Natural killer cell (primary cell): ENCODE measurements at regions of chr15 and their contacts with region 1.

Region 1: GRCh38 chr15:31215490-31216214 is 111.0 kb upstream of the KLF13 start:
- DNase-seq: peak; percentile 68 to 84
- ATAC-seq: peak; percentile 82 to 87 (median 85)
- H3K4me3 ChIP-seq: peak overlapping the region; percentile 27
- H3K4me3 Mint-ChIP-seq: peak overlapping the region; percentile 87
- H3K27ac ChIP-seq: peak overlapping the region; percentile 87
- H3K27ac Mint-ChIP-seq: peak overlapping the region; percentile 66 to 87
- H3K4me1 ChIP-seq: peaks cover 23% of the 10 kb centered on the region
- H3K4me1 Mint-ChIP-seq: peaks cover 12 to 35% of the 10 kb centered on the region in 2 donors
- H3K27me3 ChIP-seq: no peaks in the 10 kb centered on the region
- H3K27me3 Mint-ChIP-seq: no peaks in the 10 kb centered on the region
- CTCF ChIP-seq: peak; percentile 78

Region 2: DNA sequence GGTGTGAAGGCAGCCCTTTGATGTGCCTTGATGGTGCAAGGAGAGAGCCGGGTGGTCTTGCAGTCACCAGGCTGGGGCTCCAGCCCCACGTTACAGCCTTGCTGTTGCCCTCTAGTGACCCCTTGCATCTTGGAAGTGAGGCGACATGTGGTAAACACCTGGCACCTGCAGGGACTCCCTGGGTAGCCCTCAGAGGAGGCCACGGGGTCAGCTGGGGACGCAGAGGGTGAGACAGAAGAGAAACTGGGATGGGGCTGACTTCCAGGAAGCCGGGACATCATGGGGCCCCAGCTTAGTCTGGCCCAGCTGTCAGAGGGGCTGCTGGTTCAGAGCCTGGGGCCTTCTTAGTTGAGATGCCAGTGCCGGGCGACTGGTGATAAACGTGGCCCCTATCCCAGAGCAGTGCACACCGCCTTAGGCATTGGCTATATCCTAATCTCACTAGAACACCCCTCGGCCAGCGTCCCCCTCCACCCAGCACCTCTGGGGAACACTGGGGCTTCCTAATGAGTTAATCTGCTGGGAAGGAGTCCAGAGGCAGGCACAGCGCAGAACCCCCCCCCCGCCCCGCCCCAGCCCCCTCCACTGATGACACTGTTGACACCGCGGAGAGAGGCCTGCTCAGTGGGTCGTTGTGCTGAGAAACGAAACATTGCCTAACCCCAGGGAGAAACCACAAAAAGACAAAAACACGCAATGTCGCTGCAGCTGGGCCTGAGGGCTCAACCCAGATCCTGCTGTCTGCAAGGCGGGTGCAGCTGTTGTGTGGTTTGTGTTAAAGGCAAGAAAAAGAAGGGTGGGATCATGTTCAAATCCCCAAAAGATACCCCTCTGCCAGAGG is 50.4 kb after region 1 on chr15:
- intact Hi-C with region 1: loop called (anchors 10 kb)
- DNase-seq: peak; percentile 47 to 88
- ATAC-seq: peak; percentile 74 to 83 (median 79)
- H3K4me3 ChIP-seq: no peak overlapping the region
- H3K4me3 Mint-ChIP-seq: peak overlapping the region; percentile 69
- H3K27ac ChIP-seq: peak overlapping the region; percentile 76
- H3K27ac Mint-ChIP-seq: peak overlapping the region; percentile 87 to 94
- H3K4me1 ChIP-seq: peaks cover 72% of the 10 kb centered on the region
- H3K4me1 Mint-ChIP-seq: peaks cover 58 to 78% of the 10 kb centered on the region in 2 donors
- H3K27me3 ChIP-seq: no peaks in the 10 kb centered on the region
- H3K27me3 Mint-ChIP-seq: no peaks in the 10 kb centered on the region
- CTCF ChIP-seq: no peak

Region 3: GRCh38 chr15:31571671-31572070 is 356.0 kb after region 1 on chr15:
- intact Hi-C with region 1: no loop called
- DNase-seq: no peak
- ATAC-seq: no peak
- H3K4me3 ChIP-seq: no peak overlapping the region
- H3K4me3 Mint-ChIP-seq: no peak overlapping the region
- H3K27ac ChIP-seq: no peak overlapping the region
- H3K27ac Mint-ChIP-seq: no peak overlapping the region
- H3K4me1 ChIP-seq: no peaks in the 10 kb centered on the region
- H3K4me1 Mint-ChIP-seq: no peaks in the 10 kb centered on the region
- H3K27me3 ChIP-seq: no peaks in the 10 kb centered on the region
- H3K27me3 Mint-ChIP-seq: peaks cover 6 to 19% of the 10 kb centered on the region in 2 donors
- CTCF ChIP-seq: no peak